Cardiac septum (tissue), 1 donor: ENCODE measurements at regions of chr11 and their contacts with region 1.

Region 1: DNA sequence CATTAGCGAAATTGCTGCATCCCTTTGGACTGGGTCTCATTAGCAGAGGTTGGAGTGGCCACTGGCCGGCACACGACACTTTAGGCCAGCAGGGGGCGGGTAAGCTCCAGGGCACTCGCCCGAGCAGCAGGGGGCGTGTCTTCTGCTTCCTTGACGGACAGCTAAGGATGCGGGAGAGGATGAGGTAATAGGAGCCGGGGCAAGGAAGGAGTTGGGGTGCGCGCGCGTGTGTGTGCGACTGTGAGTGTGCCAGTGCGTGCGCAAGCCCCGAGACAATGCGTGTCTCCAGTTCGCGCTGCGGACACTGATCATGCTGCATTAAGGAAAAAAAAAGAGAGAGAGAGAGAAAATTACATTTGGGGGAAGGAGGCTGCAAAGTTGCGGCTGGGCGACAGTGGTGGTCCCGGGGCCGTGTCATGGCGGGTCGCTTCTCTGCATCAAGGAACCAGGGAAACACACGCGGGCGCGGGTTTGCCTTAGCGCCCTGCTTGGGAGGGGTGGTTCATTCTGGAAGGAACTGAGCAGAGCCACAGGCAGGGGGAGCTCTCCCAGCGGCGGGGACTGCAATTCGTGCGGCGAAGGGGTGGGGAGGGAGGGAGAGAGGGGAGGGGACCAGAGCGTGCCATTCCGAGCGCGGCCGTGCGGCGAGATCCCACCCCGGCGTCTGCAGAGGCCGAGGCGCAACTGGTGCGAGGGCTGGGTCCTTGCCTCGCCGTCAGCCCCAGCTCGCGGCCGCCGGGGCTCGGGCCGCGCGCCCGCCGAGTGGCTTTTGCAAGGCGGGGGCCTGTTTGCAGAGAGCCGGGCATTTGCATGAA is at the start of gene DTX4:
- DNase-seq: peak; percentile 96
- total RNA-seq, gene DTX4: 1.5 TPM

Region 2: DNA sequence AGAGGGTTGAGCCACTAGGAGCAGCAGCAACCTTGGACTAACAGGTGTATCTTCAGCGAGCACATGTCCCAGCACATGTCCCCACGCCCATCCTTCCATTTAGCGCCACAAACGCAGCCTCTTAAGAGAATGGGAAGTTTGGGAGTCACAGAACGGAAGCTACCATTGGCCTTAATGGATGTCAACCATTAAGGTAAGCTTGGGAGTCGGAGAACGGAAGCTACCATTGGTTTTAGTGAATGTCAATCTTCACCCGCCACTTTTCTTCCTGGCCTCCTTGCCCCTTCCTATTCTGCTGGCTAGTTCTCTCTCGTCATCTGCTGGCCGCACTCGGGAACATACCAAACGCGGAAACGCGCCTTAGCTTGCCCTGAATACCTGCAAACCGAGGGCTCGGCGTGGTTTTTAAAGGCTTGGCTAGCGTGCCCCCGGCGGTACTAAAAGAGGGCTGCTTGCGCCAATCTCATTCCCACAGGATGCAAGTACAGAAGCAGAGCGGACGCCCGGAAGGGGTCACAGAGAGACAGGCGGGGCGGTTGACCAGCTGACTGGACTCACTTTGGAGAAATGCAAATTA is 208.1 kb before region 1 on chr11:
- intact Hi-C with region 1: no loop called
- DNase-seq: no peak

Region 3: GRCh38 chr11:59207988-59208451 is 36.3 kb after region 1 on chr11:
- intact Hi-C with region 1: loop called (anchors 1 kb)
- DNase-seq: no peak

Region 4: GRCh38 chr11:59283825-59284772 is 112.4 kb after region 1 on chr11:
- intact Hi-C with region 1: loop called (anchors 1 kb)
- DNase-seq: no peak

Region 5: GRCh38 chr11:59429924-59430516 is 258.3 kb after region 1 on chr11:
- intact Hi-C with region 1: loop called (anchors 5 kb)
- DNase-seq: no peak

Region 6: DNA sequence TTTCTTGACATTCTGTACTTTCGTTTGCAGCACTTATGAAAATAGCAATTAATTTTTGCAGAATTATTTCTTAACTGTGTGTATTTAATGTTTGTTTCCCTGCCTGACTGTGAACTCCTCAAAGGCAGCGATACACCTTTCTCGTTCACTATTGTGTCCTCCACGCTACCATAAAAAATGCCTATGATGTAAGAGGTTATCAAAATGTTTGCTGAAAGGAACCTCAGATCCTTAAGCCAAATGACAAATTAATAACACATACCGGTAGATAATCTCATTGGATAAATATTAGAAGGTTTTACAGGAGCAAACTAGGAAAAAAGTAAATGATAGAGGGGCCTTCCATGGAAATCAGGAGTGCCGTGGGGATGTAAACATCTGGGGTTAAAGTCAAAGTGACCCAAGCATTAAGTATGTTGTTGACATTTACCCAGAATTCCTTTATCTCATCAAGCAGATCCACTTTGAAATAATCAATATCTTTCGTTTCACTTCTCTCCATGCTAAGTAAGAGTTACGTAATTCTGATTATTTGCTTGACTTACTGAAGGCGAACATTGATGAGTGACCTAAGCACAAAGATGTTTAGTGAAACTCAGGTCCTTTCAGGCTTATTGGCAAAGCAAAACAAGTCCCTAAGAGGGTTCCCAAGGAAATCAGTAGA is 704.3 kb after region 1 on chr11:
- intact Hi-C with region 1: no loop called
- DNase-seq: no peak